Sciatic nerve (tissue), 2 donors: ENCODE measurements at regions of chr9 and their contacts with region 1.

Region 1: GRCh38 chr9:13427587-13427986 is 148.1 kb upstream of the MPDZ start:
- DNase-seq: no peak
- ATAC-seq: peak; percentile 56

Region 2: DNA sequence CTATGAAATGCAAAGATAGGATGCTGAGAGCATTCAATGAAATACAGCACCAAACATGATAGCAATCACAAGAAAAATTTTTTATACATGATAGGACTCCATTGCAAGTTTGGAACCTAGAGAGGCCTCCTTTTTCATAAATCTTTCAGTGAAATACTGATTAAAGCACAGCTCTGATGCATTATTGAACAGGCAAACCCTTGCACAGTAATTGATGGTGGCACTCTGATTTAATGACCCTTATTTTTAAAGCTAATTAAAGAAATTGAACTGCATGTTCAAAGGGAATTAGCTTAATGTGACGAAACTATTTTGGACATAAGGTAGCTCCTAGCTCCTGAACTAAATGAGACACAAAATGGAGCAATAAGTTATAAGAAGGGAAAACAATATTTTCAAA is 192.7 kb before region 1 on chr9:
- intact Hi-C with region 1: no loop called
- DNase-seq: no peak
- ATAC-seq: no peak

Region 3: DNA sequence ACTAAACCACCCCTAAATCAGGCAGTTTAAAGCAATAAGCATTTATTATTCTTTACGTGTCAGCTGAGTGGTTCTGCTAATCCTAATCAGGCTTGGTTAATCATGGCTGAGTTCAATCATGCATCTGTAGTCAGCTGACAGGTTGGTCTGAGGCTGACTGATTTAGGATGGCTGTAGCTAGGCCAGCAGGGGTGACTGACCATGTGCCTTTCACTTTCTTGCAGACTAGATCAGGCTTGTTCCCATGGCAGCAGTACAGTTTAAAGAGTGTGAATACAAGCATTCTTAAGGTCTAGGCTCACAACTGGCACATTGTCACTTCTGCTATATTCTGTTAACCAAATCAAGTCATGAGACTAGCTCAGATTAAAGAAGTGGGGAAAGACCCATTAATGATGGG is 132.0 kb before region 1 on chr9:
- intact Hi-C with region 1: no loop called
- DNase-seq: no peak
- ATAC-seq: no peak

Region 4: GRCh38 chr9:13351778-13352386 is 75.7 kb before region 1 on chr9:
- intact Hi-C with region 1: no loop called
- DNase-seq: no peak
- ATAC-seq: peak; percentile 69

Region 5: DNA sequence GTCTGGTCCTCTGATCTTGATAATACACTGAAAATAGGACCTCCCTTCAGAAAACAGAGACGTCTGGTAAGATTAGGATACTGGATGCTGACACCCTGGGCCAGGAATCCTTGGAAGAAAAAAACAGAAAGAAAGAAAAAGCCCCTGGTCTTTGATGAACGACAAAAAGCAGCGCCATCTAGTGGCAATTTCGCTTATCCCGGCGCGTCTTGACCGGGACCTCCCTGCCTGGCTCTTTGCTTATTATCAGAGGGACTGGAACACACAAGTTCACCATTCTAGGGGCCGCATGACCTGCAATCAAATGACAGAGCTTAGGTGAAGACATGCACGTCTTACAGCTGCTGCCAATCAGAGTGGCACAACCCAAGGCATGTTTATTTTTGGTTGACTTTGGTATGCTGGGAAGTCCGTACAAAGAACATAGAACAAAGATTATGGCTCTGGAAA is 1001.2 kb after region 1 on chr9:
- intact Hi-C with region 1: loop called (anchors 2 kb)
- DNase-seq: peak; percentile 88
- ATAC-seq: peak; percentile 70